Naive thymus-derived CD4-positive, alpha-beta T cell (primary cell): ENCODE measurements at regions of chr19 and their contacts with region 1.

Region 1: GRCh38 chr19:57389730-57390598 is at the start of gene ZNF548:
- DNase-seq: peak; percentile 85 to 99 (median 92)
- ATAC-seq: peak; percentile 98
- H3K4me3 ChIP-seq: peak within 1 kb of the TSS; percentile 72
- H3K4me3 Mint-ChIP-seq: peak within 1 kb of the TSS; percentile 89 to 100 (median 97)
- H3K27ac ChIP-seq: peak within 1 kb of the TSS; percentile 93
- H3K27ac Mint-ChIP-seq: peak within 1 kb of the TSS; percentile 91 to 100 (median 97)
- H3K4me1 ChIP-seq: peaks cover 13 to 15% of the 10 kb centered on the region in 2 donors
- H3K4me1 Mint-ChIP-seq: peaks cover 11 to 45% (median 29%) of the 10 kb centered on the region in 7 donors
- H3K27me3 ChIP-seq: no peaks in the 10 kb centered on the region
- H3K27me3 Mint-ChIP-seq: no peaks in the 10 kb centered on the region
- total RNA-seq, gene ZNF548: 26.4 to 115 (median 66.9) TPM

Region 2: GRCh38 chr19:57279418-57280066 is 110.4 kb before region 1 on chr19:
- CTCF ChIA-PET with region 1: no interaction called
- POLR2A ChIA-PET with region 1: no interaction called
- intact Hi-C with region 1: loop called (anchors 1 kb)
- DNase-seq: peak in 6 of 9 donors; percentile 60 to 81 (median 78)
- ATAC-seq: peak; percentile 85
- H3K4me3 ChIP-seq: peak overlapping the region; percentile 80
- H3K4me3 Mint-ChIP-seq: no peak overlapping the region
- H3K27ac ChIP-seq: peak overlapping the region; percentile 98
- H3K27ac Mint-ChIP-seq: peak overlapping the region in 2 of 9 donors; percentile 6 to 51
- H3K4me1 ChIP-seq: peaks cover 18 to 23% of the 10 kb centered on the region in 2 donors
- H3K4me1 Mint-ChIP-seq: peaks cover 7 to 33% (median 25%) of the 10 kb centered on the region in 7 donors
- H3K27me3 ChIP-seq: no peaks in the 10 kb centered on the region
- H3K27me3 Mint-ChIP-seq: no peaks in the 10 kb centered on the region

Region 3: GRCh38 chr19:57410877-57411671 is 21.1 kb after region 1 on chr19 and contains the start of gene ZNF17:
- CTCF ChIA-PET with region 1: interaction called, 3 read pairs
- POLR2A ChIA-PET with region 1: interaction called, 10 read pairs
- intact Hi-C with region 1: loop called (anchors 1 kb)
- DNase-seq: peak; percentile 72 to 95 (median 88)
- ATAC-seq: peak; percentile 100
- H3K4me3 ChIP-seq: peak within 1 kb of the TSS; percentile 80
- H3K4me3 Mint-ChIP-seq: peak within 1 kb of the TSS; percentile 85 to 97 (median 96)
- H3K27ac ChIP-seq: peak within 1 kb of the TSS; percentile 80
- H3K27ac Mint-ChIP-seq: peak within 1 kb of the TSS; percentile 78 to 96 (median 92)
- H3K4me1 ChIP-seq: peaks cover 3 to 8% of the 10 kb centered on the region in 2 donors
- H3K4me1 Mint-ChIP-seq: peaks cover 20 to 46% (median 34%) of the 10 kb centered on the region in 7 donors
- H3K27me3 ChIP-seq: no peaks in the 10 kb centered on the region
- H3K27me3 Mint-ChIP-seq: no peaks in the 10 kb centered on the region
- total RNA-seq, gene ZNF17: 9.3 to 27.8 (median 17.2) TPM

Region 4: DNA sequence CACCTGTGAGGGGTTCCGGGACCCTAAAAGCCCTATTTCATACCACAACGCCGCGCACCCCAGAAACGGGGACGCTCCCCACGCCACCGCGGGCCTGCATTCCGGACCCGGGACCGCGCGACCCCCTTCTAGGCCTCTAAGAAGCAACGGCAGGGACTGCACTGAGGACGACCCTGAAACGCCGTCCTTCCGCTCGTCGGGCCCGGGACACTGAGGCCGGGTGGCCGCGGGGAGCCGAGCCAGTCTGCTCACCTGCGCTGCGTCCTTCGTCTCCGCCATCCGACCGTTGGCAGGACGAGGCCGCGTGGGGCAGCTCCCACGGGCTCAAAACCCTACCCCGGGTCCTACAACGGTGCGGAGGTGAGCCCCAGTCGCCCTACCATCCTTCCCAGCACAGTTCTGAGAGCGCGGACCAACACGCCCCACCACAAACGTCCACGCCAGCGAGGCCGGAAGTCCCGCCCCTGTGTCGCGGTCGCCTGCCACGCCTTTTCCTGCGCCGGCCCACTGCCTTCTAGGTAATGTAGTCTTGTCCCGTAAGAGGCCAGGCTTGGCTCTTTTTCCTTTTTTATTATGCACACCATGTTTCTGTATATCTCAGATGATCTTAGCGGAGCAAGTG is 169.6 kb after region 1 on chr19 and contains the start of gene ZNF550:
- CTCF ChIA-PET with region 1: no interaction called
- POLR2A ChIA-PET with region 1: no interaction called
- intact Hi-C with region 1: loop called in 1 of 2 experiments (anchors 1 kb)
- DNase-seq: peak; percentile 71 to 85 (median 84)
- ATAC-seq: peak; percentile 99
- H3K4me3 ChIP-seq: peak within 1 kb of the TSS; percentile 89
- H3K4me3 Mint-ChIP-seq: peak within 1 kb of the TSS; percentile 87 to 99 (median 98)
- H3K27ac ChIP-seq: peak within 1 kb of the TSS; percentile 82
- H3K27ac Mint-ChIP-seq: peak within 1 kb of the TSS; percentile 81 to 96 (median 91)
- H3K4me1 ChIP-seq: peaks cover 16 to 19% of the 10 kb centered on the region in 2 donors
- H3K4me1 Mint-ChIP-seq: peaks cover 21 to 45% (median 33%) of the 10 kb centered on the region in 7 donors
- H3K27me3 ChIP-seq: no peaks in the 10 kb centered on the region
- H3K27me3 Mint-ChIP-seq: peaks cover 0 to 16% (median 4%) of the 10 kb centered on the region in 5 donors
- total RNA-seq, gene ZNF550: 12.9 to 56.2 (median 23.5) TPM

Region 5: DNA sequence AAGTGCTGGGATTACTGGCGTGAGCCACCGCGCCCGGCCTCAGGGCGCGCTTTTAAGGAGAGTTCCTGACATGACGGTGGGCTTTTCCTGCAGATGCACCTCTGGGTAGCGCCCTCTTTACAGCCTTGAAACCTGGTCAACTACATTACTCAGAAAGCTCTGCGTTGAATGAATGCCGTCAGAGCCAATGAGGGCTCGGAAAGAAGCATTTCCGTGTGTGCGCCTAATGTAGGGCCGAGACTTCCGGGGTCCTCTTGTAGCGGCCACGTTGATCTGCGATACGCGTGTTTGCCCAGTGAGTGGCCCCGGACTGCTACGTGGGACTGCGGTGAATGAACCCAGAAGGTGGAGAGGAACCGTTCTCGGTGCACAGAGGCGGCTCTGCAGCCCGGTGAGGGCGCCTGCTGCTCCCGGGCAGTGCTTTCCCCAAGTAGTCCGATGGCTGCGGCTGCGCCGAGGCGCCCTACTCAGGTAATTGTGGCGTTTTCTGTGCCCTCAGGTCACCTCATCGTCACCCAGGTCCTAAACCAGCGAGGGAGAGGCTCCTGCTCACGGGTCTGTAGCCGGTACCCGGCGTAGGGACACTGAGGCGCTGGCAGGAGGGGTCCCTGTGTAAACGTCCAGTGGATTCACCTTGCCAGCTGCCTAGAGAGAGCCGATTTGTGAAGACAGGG is 429.6 kb after region 1 on chr19:
- CTCF ChIA-PET with region 1: no interaction called
- POLR2A ChIA-PET with region 1: interaction called, 4 read pairs
- intact Hi-C with region 1: loop called in 1 of 2 experiments (anchors 10 kb)
- DNase-seq: peak; percentile 45 to 85 (median 79)
- ATAC-seq: peak; percentile 89
- H3K4me3 ChIP-seq: peak overlapping the region; percentile 98
- H3K4me3 Mint-ChIP-seq: peak overlapping the region; percentile 95 to 99 (median 98)
- H3K27ac ChIP-seq: peak overlapping the region; percentile 92
- H3K27ac Mint-ChIP-seq: peak overlapping the region; percentile 88 to 99 (median 95)
- H3K4me1 ChIP-seq: peaks cover 0 to 13% of the 10 kb centered on the region in 2 donors
- H3K4me1 Mint-ChIP-seq: peaks cover 38 to 73% (median 67%) of the 10 kb centered on the region in 7 donors
- H3K27me3 ChIP-seq: no peaks in the 10 kb centered on the region
- H3K27me3 Mint-ChIP-seq: no peaks in the 10 kb centered on the region

Region 6: GRCh38 chr19:58212336-58213074 is 822.5 kb after region 1 on chr19:
- CTCF ChIA-PET with region 1: no interaction called
- POLR2A ChIA-PET with region 1: no interaction called
- intact Hi-C with region 1: no loop called
- DNase-seq: no peak
- ATAC-seq: no peak
- H3K4me3 ChIP-seq: peak overlapping the region; percentile 2
- H3K4me3 Mint-ChIP-seq: no peak overlapping the region
- H3K27ac ChIP-seq: no peak overlapping the region
- H3K27ac Mint-ChIP-seq: no peak overlapping the region
- H3K4me1 ChIP-seq: no peaks in the 10 kb centered on the region
- H3K4me1 Mint-ChIP-seq: peaks cover 0 to 3% (median 0%) of the 10 kb centered on the region in 7 donors
- H3K27me3 ChIP-seq: no peaks in the 10 kb centered on the region
- H3K27me3 Mint-ChIP-seq: no peaks in the 10 kb centered on the region